ENCODE measurements at regions of chr9 and their contacts with region 1.

Region 1: GRCh38 chr9:135343837-135344522 is 135.6 kb upstream of the PPP1R26 start:
- DNase-seq: peak; percentile 59 to 81 (median 75)
- ATAC-seq: peak; percentile 72
- H3K4me3 ChIP-seq: no peak overlapping the region
- H3K27ac ChIP-seq: no peak overlapping the region
- H3K4me1 ChIP-seq: peaks cover 8% of the 10 kb centered on the region
- H3K27me3 ChIP-seq: no peaks in the 10 kb centered on the region
- CTCF ChIP-seq: peak; percentile 85 to 94 (median 91)
- POLR2A ChIP-seq: no peak

Region 2: GRCh38 chr9:135080286-135081263 is 263.4 kb before region 1 on chr9:
- intact Hi-C with region 1: loop called (anchors 5 kb)
- DNase-seq: peak in 1 of 4 donors; percentile 1
- ATAC-seq: no peak
- H3K4me3 ChIP-seq: no peak overlapping the region
- H3K27ac ChIP-seq: no peak overlapping the region
- H3K4me1 ChIP-seq: peaks cover 28% of the 10 kb centered on the region
- H3K27me3 ChIP-seq: no peaks in the 10 kb centered on the region
- CTCF ChIP-seq: no peak
- POLR2A ChIP-seq: no peak

Measured in body of pancreas (tissue), 4 donors.